ENCODE measurements at regions of chr2 and their contacts with region 1.

Region 1: DNA sequence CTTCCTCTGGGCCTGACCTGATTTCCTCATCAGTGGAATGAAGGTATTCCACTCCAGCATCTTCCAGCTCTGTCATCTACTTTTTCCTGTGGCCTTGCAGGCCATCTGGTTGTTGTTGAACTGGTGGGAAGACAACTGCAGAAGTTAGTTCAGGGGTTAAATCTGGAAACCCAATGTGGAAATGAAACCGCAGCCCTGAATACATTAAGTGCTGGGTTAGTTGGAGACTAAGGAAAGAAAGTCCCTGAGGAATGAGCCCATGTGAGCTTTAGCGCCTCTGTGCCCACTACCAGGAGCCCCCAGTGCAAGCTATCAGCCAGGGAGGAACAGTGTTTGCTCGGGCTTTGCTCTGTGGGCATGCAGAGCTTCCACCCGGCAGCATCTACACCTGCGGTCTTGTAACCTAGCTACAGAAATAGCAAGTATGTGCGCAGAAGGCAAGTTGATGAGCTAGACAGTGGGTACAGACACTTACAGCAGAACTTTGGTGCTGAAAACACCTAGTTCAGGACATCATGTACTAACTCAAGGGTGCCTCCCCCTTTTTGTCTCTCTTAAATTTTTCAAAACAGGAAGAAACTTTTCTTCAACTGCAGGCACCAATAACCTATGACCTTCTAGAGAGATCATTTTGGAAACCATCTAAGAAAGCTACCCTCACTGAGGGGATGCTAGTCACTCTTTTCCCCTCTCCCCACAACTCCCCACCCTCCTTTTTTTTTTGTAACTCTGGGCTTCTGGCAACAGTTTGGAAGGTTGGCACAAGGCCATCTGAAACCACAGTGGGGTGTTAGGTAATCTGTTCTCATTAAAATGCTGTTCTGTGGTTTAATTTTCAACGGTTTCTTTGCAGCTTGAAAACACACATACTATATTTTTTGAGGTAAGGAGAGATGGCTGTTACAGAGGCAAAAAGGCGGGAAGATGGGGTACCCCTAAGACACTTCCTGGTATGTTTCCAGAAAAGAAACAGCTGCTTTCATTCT is 18.3 kb upstream of the CXCR4 start:
- DNase-seq: peak; percentile 71 to 98 (median 84)
- ATAC-seq: peak; percentile 52
- H3K4me3 ChIP-seq: peak overlapping the region; percentile 10 to 23
- H3K4me3 Mint-ChIP-seq: peak overlapping the region; percentile 61
- H3K27ac ChIP-seq: peak overlapping the region; percentile 89 to 98
- H3K27ac Mint-ChIP-seq: peak overlapping the region; percentile 100
- H3K4me1 ChIP-seq: peaks cover 87% of the 10 kb centered on the region
- H3K4me1 Mint-ChIP-seq: peaks cover 96% of the 10 kb centered on the region
- H3K27me3 ChIP-seq: no peaks in the 10 kb centered on the region
- H3K27me3 Mint-ChIP-seq: no peaks in the 10 kb centered on the region
- CTCF ChIP-seq: no peak

Region 2: DNA sequence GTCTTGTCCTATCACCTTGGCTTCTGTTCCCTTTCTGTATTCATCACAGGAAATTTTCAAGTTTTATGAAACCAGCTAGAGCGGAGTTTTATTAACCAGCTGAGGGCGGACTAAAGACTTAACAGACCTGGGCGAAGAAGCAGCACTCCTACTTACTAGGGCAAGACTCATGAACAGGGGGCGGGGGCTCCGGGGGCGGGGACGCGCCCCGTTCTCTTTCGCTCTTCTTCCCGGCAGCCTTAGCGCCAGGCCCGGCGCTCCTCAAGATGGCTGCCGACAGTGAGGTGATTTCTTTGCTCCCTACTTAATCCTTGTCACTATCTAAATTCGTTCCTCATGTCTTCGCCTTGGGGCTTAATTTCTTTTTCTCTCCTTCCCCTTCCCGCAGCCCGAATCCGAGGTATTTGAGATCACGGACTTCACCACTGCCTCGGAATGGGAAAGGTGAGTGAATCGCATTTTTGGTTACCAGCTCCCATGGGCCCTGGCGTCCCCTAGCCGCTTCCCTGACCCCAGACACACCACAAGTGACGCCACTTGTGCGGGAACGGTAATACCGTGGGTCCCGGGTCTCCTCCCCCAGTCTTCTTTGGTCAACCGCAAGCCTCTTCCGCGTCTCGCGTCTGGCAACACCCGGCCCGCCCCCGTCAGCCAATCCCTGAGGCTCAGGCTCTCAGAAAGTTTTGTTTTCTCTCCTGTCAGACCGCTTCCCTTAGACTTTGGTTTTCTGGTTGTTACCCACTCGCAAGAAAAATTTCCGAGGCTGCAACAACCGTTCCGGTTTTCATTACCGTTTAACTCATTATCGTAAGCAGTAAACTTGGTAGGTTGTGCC is 1084.0 kb before region 1 on chr2 and contains the start of gene RAB3GAP1:
- CTCF ChIA-PET with region 1: no interaction called
- POLR2A ChIA-PET with region 1: no interaction called
- intact Hi-C with region 1: loop called in 1 of 2 experiments (anchors 10 kb)
- DNase-seq: peak; percentile 80 to 97 (median 91)
- ATAC-seq: peak; percentile 80
- H3K4me3 ChIP-seq: peak within 1 kb of the TSS; percentile 79 to 80
- H3K4me3 Mint-ChIP-seq: peak within 1 kb of the TSS; percentile 92
- H3K27ac ChIP-seq: peak within 1 kb of the TSS; percentile 96
- H3K27ac Mint-ChIP-seq: peak within 1 kb of the TSS; percentile 99
- H3K4me1 ChIP-seq: peaks cover 11% of the 10 kb centered on the region
- H3K4me1 Mint-ChIP-seq: peaks cover 42% of the 10 kb centered on the region
- H3K27me3 ChIP-seq: peaks cover 0 to 3% of the 10 kb centered on the region in 2 experiments
- H3K27me3 Mint-ChIP-seq: no peaks in the 10 kb centered on the region
- CTCF ChIP-seq: no peak
- total RNA-seq, gene RAB3GAP1: 31.0 to 32.8 TPM

Region 3: DNA sequence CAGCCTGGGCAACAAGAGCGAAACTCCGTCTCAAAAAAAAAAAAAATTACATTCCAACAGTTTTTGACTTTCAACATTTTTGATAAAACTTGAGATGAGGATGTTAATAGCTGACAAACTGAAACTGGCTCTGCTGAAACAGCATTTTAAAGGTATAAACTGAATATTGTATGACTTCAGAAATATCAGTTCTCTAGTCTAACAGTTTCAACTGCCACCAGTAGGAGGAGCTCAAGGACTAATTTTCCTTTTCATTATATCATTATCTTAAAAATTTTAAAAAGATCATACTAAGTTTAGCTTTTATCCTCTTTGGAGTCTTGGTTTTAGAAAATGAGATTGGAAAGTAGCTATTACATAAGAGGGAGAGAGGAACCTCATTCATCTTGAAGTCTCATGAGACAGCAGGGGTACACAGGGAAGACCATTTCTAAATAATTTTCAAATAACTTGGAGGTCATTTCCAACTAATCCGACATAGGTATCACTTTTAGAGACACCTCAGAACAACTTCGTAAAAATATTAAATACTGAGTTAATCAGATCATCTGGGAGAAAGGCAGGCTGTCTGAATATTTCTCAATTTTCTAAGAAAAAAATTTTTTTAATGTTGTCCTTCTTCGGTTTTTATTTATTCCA is 222.4 kb before region 1 on chr2:
- CTCF ChIA-PET with region 1: interaction called, 10 read pairs
- POLR2A ChIA-PET with region 1: no interaction called
- intact Hi-C with region 1: no loop called
- DNase-seq: peak in 6 of 9 experiments; percentile 23 to 76 (median 52)
- ATAC-seq: peak; percentile 64
- H3K4me3 ChIP-seq: no peak overlapping the region
- H3K4me3 Mint-ChIP-seq: no peak overlapping the region
- H3K27ac ChIP-seq: no peak overlapping the region
- H3K27ac Mint-ChIP-seq: no peak overlapping the region
- H3K4me1 ChIP-seq: no peaks in the 10 kb centered on the region
- H3K4me1 Mint-ChIP-seq: peaks cover 4% of the 10 kb centered on the region
- H3K27me3 ChIP-seq: no peaks in the 10 kb centered on the region
- H3K27me3 Mint-ChIP-seq: no peaks in the 10 kb centered on the region
- CTCF ChIP-seq: peak; percentile 99

Region 4: GRCh38 chr2:136183097-136183496 is 46.9 kb after region 1 on chr2:
- CTCF ChIA-PET with region 1: no interaction called
- POLR2A ChIA-PET with region 1: interaction called, 4 read pairs
- intact Hi-C with region 1: loop called (anchors 5 kb)
- DNase-seq: no peak
- ATAC-seq: no peak
- H3K4me3 ChIP-seq: no peak overlapping the region
- H3K4me3 Mint-ChIP-seq: no peak overlapping the region
- H3K27ac ChIP-seq: no peak overlapping the region
- H3K27ac Mint-ChIP-seq: no peak overlapping the region
- H3K4me1 ChIP-seq: peaks cover 6% of the 10 kb centered on the region
- H3K4me1 Mint-ChIP-seq: peaks cover 24% of the 10 kb centered on the region
- H3K27me3 ChIP-seq: no peaks in the 10 kb centered on the region
- H3K27me3 Mint-ChIP-seq: no peaks in the 10 kb centered on the region
- CTCF ChIP-seq: no peak

Region 5: DNA sequence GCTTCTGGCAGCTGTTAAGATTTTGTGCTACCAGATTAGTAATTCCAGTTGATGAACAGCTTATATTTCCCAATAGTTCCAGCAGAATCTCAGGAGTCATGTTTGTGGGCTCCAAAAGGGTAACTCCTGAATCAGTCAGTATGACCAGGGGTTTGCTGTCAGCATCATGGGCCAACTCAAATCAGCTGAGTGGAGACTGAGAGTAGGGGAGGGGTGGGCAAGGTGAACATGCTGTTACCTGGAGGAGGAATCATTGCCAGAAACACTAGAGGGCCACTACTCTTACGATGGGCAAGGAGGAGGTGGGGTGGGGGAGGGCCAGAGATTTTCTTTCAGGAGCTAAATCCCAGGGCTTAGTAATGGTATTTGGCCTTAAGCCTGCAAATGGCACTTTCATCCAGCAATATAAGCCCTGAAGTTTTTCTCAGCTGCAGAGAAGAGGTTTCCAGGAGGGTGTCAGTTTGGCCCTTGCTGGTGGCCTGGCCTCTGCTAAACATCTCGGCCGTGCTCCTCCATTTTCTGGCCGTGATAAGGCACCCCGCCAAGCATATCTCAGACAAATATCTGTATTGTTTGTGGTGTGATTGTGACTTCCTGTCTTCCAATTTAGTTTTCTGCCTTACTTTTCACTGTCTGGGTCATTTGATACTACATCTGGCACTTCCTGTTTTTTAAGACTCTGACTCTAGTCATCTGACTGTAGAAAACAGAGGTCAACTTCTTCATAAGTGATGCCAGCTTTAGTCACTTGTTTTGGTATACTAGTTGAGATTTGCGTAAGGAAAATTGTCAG is 102.3 kb after region 1 on chr2:
- CTCF ChIA-PET with region 1: interaction called, 7 read pairs
- POLR2A ChIA-PET with region 1: interaction called, 19 read pairs
- intact Hi-C with region 1: loop called (anchors 1 kb)
- DNase-seq: peak; percentile 29 to 89 (median 65)
- ATAC-seq: peak; percentile 75
- H3K4me3 ChIP-seq: peak overlapping the region in 1 of 2 experiments; percentile 13
- H3K4me3 Mint-ChIP-seq: peak overlapping the region; percentile 30
- H3K27ac ChIP-seq: peak overlapping the region; percentile 64 to 83
- H3K27ac Mint-ChIP-seq: peak overlapping the region; percentile 91
- H3K4me1 ChIP-seq: peaks cover 31% of the 10 kb centered on the region
- H3K4me1 Mint-ChIP-seq: peaks cover 56% of the 10 kb centered on the region
- H3K27me3 ChIP-seq: no peaks in the 10 kb centered on the region
- H3K27me3 Mint-ChIP-seq: no peaks in the 10 kb centered on the region
- CTCF ChIP-seq: no peak

Region 6: GRCh38 chr2:136378712-136379595 is 242.7 kb after region 1 on chr2:
- CTCF ChIA-PET with region 1: interaction called, 5 read pairs
- POLR2A ChIA-PET with region 1: interaction called, 7 read pairs
- intact Hi-C with region 1: loop called (anchors 5 kb)
- DNase-seq: peak; percentile 57 to 88 (median 81)
- ATAC-seq: peak; percentile 40
- H3K4me3 ChIP-seq: no peak overlapping the region
- H3K4me3 Mint-ChIP-seq: no peak overlapping the region
- H3K27ac ChIP-seq: no peak overlapping the region
- H3K27ac Mint-ChIP-seq: peak overlapping the region; percentile 72
- H3K4me1 ChIP-seq: peaks cover 46% of the 10 kb centered on the region
- H3K4me1 Mint-ChIP-seq: peaks cover 71% of the 10 kb centered on the region
- H3K27me3 ChIP-seq: no peaks in the 10 kb centered on the region
- H3K27me3 Mint-ChIP-seq: no peaks in the 10 kb centered on the region
- CTCF ChIP-seq: peak; percentile 86